Aorta (tissue), 5 donors: ENCODE measurements at regions of chr17 and their contacts with region 1.

Region 1: GRCh38 chr17:49567871-49568694 is 7.6 kb upstream of the NXPH3 start:
- DNase-seq: peak; percentile 95 to 96
- ATAC-seq: peak; percentile 90
- H3K4me3 ChIP-seq: no peak overlapping the region
- H3K27ac ChIP-seq: peak overlapping the region in 1 of 2 donors; percentile 90
- H3K4me1 ChIP-seq: peaks cover 0 to 5% of the 10 kb centered on the region in 2 donors
- H3K27me3 ChIP-seq: no peaks in the 10 kb centered on the region

Region 2: GRCh38 chr17:49694847-49695683 is 127.0 kb after region 1 on chr17:
- intact Hi-C with region 1: loop called (anchors 1 to 2 kb)
- DNase-seq: peak in 1 of 2 donors; percentile 86
- ATAC-seq: no peak
- H3K4me3 ChIP-seq: no peak overlapping the region
- H3K27ac ChIP-seq: peak overlapping the region in 1 of 2 donors; percentile 41
- H3K4me1 ChIP-seq: peaks cover 0 to 3% of the 10 kb centered on the region in 2 donors
- H3K27me3 ChIP-seq: no peaks in the 10 kb centered on the region

Region 3: GRCh38 chr17:49788478-49789242 is 220.6 kb after region 1 on chr17 and contains the start of gene KAT7:
- intact Hi-C with region 1: loop called (anchors 5 kb)
- DNase-seq: peak; percentile 99
- ATAC-seq: peak; percentile 98
- H3K4me3 ChIP-seq: peak within 1 kb of the TSS; percentile 64 to 86
- H3K27ac ChIP-seq: peak within 1 kb of the TSS; percentile 73 to 98
- H3K4me1 ChIP-seq: no peaks in the 10 kb centered on the region
- H3K27me3 ChIP-seq: no peaks in the 10 kb centered on the region
- total RNA-seq, gene KAT7: 60.8 to 63.9 TPM

Region 4: GRCh38 chr17:49851387-49852291 is 283.6 kb after region 1 on chr17:
- intact Hi-C with region 1: loop called (anchors 2 to 5 kb)
- DNase-seq: peak; percentile 89 to 95
- ATAC-seq: peak; percentile 85
- H3K4me3 ChIP-seq: peak overlapping the region; percentile 64 to 84
- H3K27ac ChIP-seq: no peak overlapping the region
- H3K4me1 ChIP-seq: no peaks in the 10 kb centered on the region
- H3K27me3 ChIP-seq: no peaks in the 10 kb centered on the region

Region 5: DNA sequence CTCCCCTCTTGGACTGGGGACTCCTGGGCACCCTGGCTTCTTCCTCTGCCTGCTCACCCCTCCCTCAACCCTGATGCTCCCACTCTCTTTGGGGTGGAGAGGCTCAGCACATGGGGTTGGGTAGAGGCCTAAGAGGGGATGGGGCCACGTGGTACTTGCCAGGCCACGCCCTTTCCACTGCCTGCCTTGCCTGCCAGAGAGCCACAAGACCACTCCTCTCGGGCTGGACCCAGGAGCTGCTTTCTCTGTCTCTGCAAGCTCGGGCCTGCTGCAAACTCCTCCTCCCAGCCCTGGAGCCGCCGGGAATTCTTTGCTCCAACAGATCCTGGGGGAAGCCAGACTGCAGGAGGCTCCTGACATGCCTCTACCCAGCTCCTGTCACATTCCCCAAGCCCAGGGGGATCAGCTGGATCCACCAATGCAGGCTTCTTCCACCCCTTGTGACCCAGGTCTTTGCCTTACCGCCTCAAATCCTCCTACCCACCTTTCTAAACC is 412.7 kb after region 1 on chr17:
- intact Hi-C with region 1: no loop called
- DNase-seq: no peak
- ATAC-seq: no peak
- H3K4me3 ChIP-seq: no peak overlapping the region
- H3K27ac ChIP-seq: no peak overlapping the region
- H3K4me1 ChIP-seq: no peaks in the 10 kb centered on the region
- H3K27me3 ChIP-seq: no peaks in the 10 kb centered on the region

Region 6: GRCh38 chr17:49997791-49998703 is 430.0 kb after region 1 on chr17:
- intact Hi-C with region 1: loop called (anchors 5 kb)
- DNase-seq: peak; percentile 84 to 88
- ATAC-seq: peak; percentile 83
- H3K4me3 ChIP-seq: no peak overlapping the region
- H3K27ac ChIP-seq: no peak overlapping the region
- H3K4me1 ChIP-seq: no peaks in the 10 kb centered on the region
- H3K27me3 ChIP-seq: no peaks in the 10 kb centered on the region

Region 7: DNA sequence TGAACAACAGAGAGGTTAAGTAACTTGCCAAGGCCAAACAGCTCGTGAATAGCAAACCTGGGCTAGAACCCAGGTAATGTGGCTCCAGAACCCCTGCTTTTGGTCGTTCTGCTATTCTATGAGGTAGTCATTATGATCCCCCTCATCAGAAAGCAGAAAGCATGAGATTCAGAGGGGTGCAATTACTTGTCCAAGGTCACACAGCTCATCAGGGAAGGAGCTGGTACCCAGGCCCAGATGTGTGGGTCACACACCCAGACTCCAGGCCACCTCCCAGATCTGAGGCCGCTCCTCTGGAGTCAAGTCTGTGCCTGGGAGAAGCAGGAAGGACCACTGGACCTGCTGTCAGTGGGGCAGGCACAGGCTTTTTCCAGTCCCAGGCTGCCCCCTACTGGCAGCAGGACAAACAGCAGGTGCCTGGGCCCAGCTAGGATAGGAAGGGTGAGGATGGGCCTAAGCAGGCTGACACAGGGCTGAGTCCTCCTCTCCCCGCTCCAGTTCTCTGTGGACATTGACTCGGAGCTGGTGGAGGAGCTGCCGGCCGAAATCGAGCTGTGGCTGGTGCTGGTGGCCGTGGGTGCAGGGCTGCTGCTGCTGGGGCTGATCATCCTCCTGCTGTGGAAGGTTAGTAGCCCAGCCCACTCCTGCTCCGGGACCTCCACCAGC is 519.3 kb after region 1 on chr17:
- intact Hi-C with region 1: loop called in 1 of 2 experiments (anchors 10 kb)
- DNase-seq: peak; percentile 82 to 89
- ATAC-seq: peak; percentile 79
- H3K4me3 ChIP-seq: no peak overlapping the region
- H3K27ac ChIP-seq: peak overlapping the region in 1 of 2 donors; percentile 10
- H3K4me1 ChIP-seq: no peaks in the 10 kb centered on the region
- H3K27me3 ChIP-seq: no peaks in the 10 kb centered on the region